ENCODE measurements at regions of chr17 and their contacts with region 1.

Region 1: DNA sequence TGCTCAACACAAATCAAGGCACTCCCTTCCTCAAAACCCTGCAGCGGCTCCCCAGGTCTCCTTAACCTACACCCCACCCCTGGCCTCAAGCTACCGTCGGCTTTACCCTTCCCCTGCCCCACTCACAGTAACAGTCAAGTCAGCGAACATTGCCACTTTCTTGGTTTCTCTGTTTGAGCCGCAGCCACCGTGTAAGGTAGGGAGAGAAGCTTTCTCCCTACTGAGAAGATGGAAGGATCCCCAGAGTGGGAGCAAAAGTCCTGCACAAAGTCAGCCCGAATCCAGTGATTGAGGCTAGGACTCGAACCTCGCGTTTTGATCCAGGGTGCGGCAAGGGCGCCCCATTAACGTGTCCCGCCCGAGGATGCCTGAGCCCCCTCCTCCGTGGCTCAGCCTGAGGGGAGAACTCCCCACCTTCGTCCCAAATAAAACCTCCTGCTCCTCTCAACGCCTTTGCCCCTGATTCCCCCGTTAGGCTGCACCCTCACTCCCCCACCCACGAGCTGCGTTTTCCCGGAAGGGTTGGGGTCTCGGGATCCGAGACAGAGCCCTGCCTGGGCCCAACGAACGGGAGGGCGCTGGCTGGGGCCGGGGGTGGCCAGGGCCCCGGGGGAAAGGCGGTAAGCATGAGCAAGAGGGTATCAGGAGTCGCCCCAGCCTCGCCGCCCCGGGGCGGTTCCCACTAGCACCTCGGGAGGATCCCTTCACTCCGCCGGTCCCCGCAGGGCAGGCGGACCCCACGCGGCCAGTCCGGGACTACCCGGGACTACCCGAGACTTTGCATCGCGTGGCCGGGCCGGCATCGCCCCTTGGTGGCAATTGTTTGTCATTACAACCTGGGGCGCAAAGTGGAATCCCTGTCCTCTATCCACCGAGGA is 9.9 kb upstream of the NAGS start:
- DNase-seq: peak; percentile 81 to 91 (median 86)
- ATAC-seq: peak; percentile 94
- H3K4me3 ChIP-seq: peak overlapping the region; percentile 3; the same call in 1 of the 2 replicates
- H3K27ac ChIP-seq: no peak overlapping the region
- H3K4me1 ChIP-seq: peaks cover 0 to 8% of the 10 kb centered on the region in 2 experiments; a peak in 2 of 5 replicates
- H3K27me3 ChIP-seq: peaks cover 0 to 8% of the 10 kb centered on the region in 2 experiments; a peak in 3 of 5 replicates
- CTCF ChIP-seq: peak; percentile 90 to 99 (median 97)
- EP300 ChIP-seq: no peak
- POLR2A ChIP-seq: no peak
- RAD21 ChIP-seq: peak; percentile 86 to 96

Region 2: GRCh38 chr17:43878260-43879175 is 116.0 kb before region 1 on chr17:
- CTCF ChIA-PET with region 1: interaction called, 3 read pairs
- POLR2A ChIA-PET with region 1: interaction called, 5 read pairs
- in situ Hi-C with region 1: no loop called
- intact Hi-C with region 1: loop called (anchors 2 kb)
- DNase-seq: peak; percentile 82 to 89 (median 86)
- ATAC-seq: peak; percentile 95
- H3K4me3 ChIP-seq: no peak overlapping the region
- H3K27ac ChIP-seq: no peak overlapping the region
- H3K4me1 ChIP-seq: peaks cover 0 to 33% of the 10 kb centered on the region in 2 experiments; a peak in 3 of 5 replicates
- H3K27me3 ChIP-seq: peaks cover 2 to 19% of the 10 kb centered on the region in 2 experiments; a peak in 2 of 5 replicates
- CTCF ChIP-seq: peak; percentile 96 to 98 (median 96)
- EP300 ChIP-seq: no peak
- POLR2A ChIP-seq: no peak
- RAD21 ChIP-seq: peak; percentile 43 to 82; a peak in 3 of 4 replicates

Region 3: DNA sequence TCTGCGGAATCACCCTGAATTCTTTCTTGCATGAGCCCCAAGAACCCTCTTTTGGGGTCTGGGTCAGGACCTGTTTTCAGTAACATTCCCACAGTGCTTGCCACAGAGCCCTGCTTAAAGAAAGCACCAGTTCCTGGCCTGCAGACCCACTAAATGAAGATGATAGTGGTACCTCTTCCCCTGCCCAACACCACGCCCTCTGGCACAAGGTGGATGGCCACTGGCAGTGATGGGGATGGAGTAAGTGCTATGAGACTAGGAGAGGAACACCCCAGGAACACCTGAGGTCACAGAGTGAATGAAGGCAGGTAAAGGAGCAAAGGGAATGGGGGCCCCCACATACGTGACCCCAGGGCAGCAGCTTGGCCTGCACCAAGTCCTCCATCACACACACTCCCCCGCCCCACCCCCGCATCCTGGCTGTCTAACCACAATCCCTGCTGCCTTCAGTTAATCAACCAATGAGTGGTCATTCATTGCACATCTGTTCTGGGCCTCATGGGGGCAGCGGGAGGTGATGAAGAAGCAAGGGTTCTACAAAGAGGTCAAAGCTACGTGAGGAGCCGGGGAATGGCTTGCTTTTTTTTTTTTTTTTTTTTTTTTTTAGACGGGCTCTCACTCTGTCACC is 48.3 kb before region 1 on chr17:
- CTCF ChIA-PET with region 1: interaction called, 37 read pairs
- POLR2A ChIA-PET with region 1: no interaction called
- in situ Hi-C with region 1: loop called (anchors 5 kb)
- intact Hi-C with region 1: loop called (anchors 1 kb)
- DNase-seq: peak; percentile 45 to 62 (median 54)
- ATAC-seq: peak; percentile 53
- H3K4me3 ChIP-seq: no peak overlapping the region
- H3K27ac ChIP-seq: no peak overlapping the region
- H3K4me1 ChIP-seq: no peaks in the 10 kb centered on the region; a peak in 2 of 5 replicates
- H3K27me3 ChIP-seq: peaks cover 14 to 21% of the 10 kb centered on the region in 2 experiments; a peak in 4 of 5 replicates
- CTCF ChIP-seq: peak in 2 of 3 experiments; percentile 10 to 30; a peak in 2 of 6 replicates
- EP300 ChIP-seq: no peak
- POLR2A ChIP-seq: no peak
- RAD21 ChIP-seq: 0 out of 4 replicates have a peak, but pooled peaks of 1 of the 2 experiments have one; percentile 5